Heart right ventricle (tissue), 16 donors: ENCODE measurements at regions of chr12 and their contacts with region 1.

Region 1: DNA sequence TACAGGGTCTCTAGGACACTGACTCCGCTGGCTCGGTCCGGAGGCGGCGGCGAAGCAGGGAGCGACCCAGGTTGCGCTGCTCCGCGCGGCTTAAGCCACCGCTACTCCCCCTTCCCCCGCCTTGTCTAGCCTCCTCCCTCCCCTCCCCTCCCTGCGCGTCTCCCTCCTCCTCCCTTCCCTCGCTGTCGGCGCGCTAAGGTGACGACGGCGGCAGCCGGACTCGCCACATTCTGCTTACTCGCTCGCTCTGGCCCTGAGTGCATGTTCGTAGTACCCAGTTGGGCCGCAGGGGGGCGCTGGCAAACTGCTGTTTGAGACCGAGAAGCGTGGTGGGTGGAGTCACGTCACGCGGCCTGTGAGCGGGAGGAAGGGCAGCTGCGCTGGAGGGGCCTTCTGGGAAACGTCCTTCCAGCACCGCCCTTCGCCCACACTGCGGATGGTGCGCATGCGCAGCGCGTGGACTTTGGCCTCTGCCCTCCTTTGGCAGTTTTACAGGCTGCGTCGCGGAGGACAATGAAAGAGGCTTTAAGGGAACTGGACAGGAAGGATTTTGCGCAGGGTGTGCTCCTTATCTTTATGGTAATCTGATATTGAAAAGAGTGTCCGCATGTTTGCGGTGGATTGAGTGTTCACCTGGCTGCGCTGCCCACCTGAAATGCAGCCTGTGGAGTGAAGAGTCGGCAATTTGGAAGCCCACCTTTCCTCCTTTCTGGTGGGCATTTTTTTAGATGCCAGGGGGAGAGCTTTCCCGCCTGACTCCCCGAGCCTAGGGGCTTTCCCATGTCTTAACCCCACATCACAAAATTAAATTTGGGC is at the start of gene SCAF11:
- DNase-seq: peak; percentile 100
- ATAC-seq: peak; percentile 92 to 97 (median 95)
- H3K4me3 ChIP-seq: peak within 1 kb of the TSS; percentile 68 to 97 (median 86)
- H3K27ac ChIP-seq: peak within 1 kb of the TSS; percentile 96 to 100 (median 99)
- H3K4me1 ChIP-seq: peaks cover 7 to 49% (median 39%) of the 10 kb centered on the region in 9 donors
- H3K27me3 ChIP-seq: no peaks in the 10 kb centered on the region
- CTCF ChIP-seq: peak; percentile 90 to 98 (median 94)
- total RNA-seq, gene SCAF11: 71.9 to 112 (median 87.3) TPM

Region 2: GRCh38 chr12:45762185-45763110 is 228.2 kb before region 1 on chr12:
- intact Hi-C with region 1: loop called in 1 of 10 experiments (anchors 10 kb)
- DNase-seq: no peak
- ATAC-seq: peak in 5 of 8 donors; percentile 25 to 68 (median 55)
- H3K4me3 ChIP-seq: no peak overlapping the region
- H3K27ac ChIP-seq: no peak overlapping the region
- H3K4me1 ChIP-seq: peaks cover 5 to 32% (median 16%) of the 10 kb centered on the region in 9 donors
- H3K27me3 ChIP-seq: no peaks in the 10 kb centered on the region
- CTCF ChIP-seq: peak; percentile 7 to 75 (median 63)

Region 3: GRCh38 chr12:46100855-46101484 is 110.3 kb after region 1 on chr12:
- intact Hi-C with region 1: no loop called
- DNase-seq: no peak
- ATAC-seq: no peak
- H3K4me3 ChIP-seq: no peak overlapping the region
- H3K27ac ChIP-seq: no peak overlapping the region
- H3K4me1 ChIP-seq: no peaks in the 10 kb centered on the region
- H3K27me3 ChIP-seq: no peaks in the 10 kb centered on the region
- CTCF ChIP-seq: no peak

Region 4: GRCh38 chr12:46546634-46547286 is 556.1 kb after region 1 on chr12:
- intact Hi-C with region 1: no loop called
- DNase-seq: no peak
- ATAC-seq: peak in 1 of 8 donors; percentile 8
- H3K4me3 ChIP-seq: no peak overlapping the region
- H3K27ac ChIP-seq: no peak overlapping the region
- H3K4me1 ChIP-seq: peaks cover 0 to 38% (median 9%) of the 10 kb centered on the region in 9 donors
- H3K27me3 ChIP-seq: no peaks in the 10 kb centered on the region
- CTCF ChIP-seq: no peak